Ovary (tissue), 10 donors: ENCODE measurements at regions of chr11 and their contacts with region 1.

Region 1: GRCh38 chr11:47514825-47515647 is 37.9 kb downstream of the CELF1 start:
- DNase-seq: no peak
- H3K4me3 ChIP-seq: no peak overlapping the region
- H3K27ac ChIP-seq: no peak overlapping the region
- H3K4me1 ChIP-seq: peaks cover 11% of the 10 kb centered on the region
- H3K27me3 ChIP-seq: no peaks in the 10 kb centered on the region
- CTCF ChIP-seq: no peak
- EP300 ChIP-seq: no peak
- POLR2A ChIP-seq: no peak

Region 2: GRCh38 chr11:47466701-47467250 is 48.3 kb before region 1 on chr11:
- intact Hi-C with region 1: loop called in 1 of 4 experiments (anchors 10 kb)
- DNase-seq: peak; percentile 56 to 86 (median 76)
- H3K4me3 ChIP-seq: no peak overlapping the region
- H3K27ac ChIP-seq: peak overlapping the region; percentile 30 to 48
- H3K4me1 ChIP-seq: peaks cover 12% of the 10 kb centered on the region
- H3K27me3 ChIP-seq: no peaks in the 10 kb centered on the region
- CTCF ChIP-seq: no peak
- EP300 ChIP-seq: no peak
- POLR2A ChIP-seq: no peak